MCF 10A (cell line): ENCODE measurements at regions of chr12 and their contacts with region 1.

Region 1: GRCh38 chr12:870378-870777 is 79.1 kb downstream of the RAD52 start:
- DNase-seq: no peak
- H3K4me3 Mint-ChIP-seq: no peak overlapping the region
- H3K27ac Mint-ChIP-seq: no peak overlapping the region
- H3K4me1 Mint-ChIP-seq: no peaks in the 10 kb centered on the region
- H3K27me3 Mint-ChIP-seq: no peaks in the 10 kb centered on the region
- CTCF ChIP-seq: no peak

Region 2: GRCh38 chr12:857611-858010 is 12.8 kb before region 1 on chr12:
- CTCF ChIA-PET with region 1: interaction called, 3 read pairs
- POLR2A ChIA-PET with region 1: interaction called, 12 read pairs
- intact Hi-C with region 1: no loop called
- DNase-seq: peak; percentile 88
- H3K4me3 Mint-ChIP-seq: peak overlapping the region; percentile 47
- H3K27ac Mint-ChIP-seq: peak overlapping the region; percentile 92
- H3K4me1 Mint-ChIP-seq: peaks cover 24% of the 10 kb centered on the region
- H3K27me3 Mint-ChIP-seq: no peaks in the 10 kb centered on the region
- CTCF ChIP-seq: no peak